Activated CD4-positive, alpha-beta T cell treated with anti-CD3 and anti-CD28 coated beads for 36 hours (primary cell): ENCODE measurements at regions of chr2 and their contacts with region 1.

Region 1: GRCh38 chr2:218257390-218257981 is 3.3 kb upstream of the GPBAR1 start:
- DNase-seq: peak; percentile 85
- ATAC-seq: peak; percentile 75
- H3K4me3 Mint-ChIP-seq: no peak overlapping the region
- H3K27ac Mint-ChIP-seq: peak overlapping the region; percentile 81
- H3K4me1 Mint-ChIP-seq: peaks cover 38% of the 10 kb centered on the region
- H3K27me3 Mint-ChIP-seq: no peaks in the 10 kb centered on the region

Region 2: DNA sequence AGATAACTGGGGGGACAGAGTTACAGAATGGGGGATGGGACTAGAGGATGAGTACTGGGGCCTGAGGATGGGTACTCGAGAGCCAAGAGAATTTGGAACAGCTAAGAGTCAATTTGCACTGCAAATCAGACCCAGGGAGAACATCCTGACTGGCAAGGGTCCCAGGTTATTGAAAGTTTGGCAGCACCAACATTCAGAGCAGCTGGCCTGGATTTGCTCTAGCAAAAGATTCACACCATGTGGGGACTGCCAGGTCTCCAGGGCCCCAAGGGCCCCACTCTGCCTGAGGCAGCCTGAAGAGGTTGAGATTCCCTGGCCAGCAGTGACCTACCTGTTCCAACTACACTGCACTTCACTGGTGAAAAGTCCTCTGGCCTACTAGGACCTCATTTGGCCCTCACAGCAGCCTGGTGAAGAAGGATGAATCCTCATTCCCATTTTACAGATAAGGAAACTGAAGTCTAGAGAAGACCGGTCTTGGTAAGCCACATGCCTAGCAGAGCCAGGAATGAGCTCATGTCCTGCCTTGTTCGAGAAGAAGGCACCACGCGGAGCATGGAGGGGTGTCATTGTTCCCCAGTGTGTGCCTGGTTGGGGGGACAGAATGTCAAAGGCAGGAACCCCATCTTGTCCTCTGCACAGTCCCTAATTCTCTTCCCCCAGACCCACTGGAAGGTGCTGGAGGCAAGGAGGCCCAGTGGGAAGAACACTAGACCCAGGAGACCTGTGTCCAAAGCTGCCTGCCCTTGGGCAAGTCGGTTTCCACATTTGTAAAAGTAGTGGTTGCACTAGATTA is 513.3 kb before region 1 on chr2:
- CTCF ChIA-PET with region 1: no interaction called
- POLR2A ChIA-PET with region 1: no interaction called
- intact Hi-C with region 1: no loop called
- DNase-seq: no peak
- ATAC-seq: no peak
- H3K4me3 Mint-ChIP-seq: no peak overlapping the region
- H3K27ac Mint-ChIP-seq: no peak overlapping the region
- H3K4me1 Mint-ChIP-seq: no peaks in the 10 kb centered on the region
- H3K27me3 Mint-ChIP-seq: no peaks in the 10 kb centered on the region

Region 3: DNA sequence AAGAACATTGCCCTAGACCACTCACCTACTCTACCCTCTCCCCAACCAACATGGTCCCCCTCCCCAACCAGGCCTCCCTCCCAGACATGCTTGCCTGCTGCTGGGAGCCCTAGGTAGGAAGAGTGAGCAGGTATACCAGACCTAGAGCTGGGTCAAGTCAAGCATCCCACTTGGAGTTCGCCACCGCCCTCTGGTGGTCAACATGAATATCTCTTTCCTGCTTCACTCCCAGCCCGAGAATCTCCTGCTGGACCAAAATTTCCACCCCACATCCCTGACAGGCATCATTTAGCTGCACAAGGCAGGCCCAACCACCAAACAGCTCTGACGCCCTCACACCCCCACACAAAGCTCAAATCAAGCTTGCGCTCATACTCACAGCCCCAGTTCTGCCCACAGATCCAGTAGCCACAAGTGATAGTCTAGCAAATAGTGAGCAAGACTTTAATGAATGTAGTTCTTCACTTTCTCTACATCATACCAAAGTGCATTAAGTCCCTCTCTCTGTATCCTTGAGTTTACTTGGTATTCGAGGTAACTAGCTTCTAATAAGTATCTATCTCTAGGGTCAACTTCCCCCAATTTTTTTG is 370.7 kb before region 1 on chr2:
- CTCF ChIA-PET with region 1: no interaction called
- POLR2A ChIA-PET with region 1: no interaction called
- intact Hi-C with region 1: no loop called
- DNase-seq: peak; percentile 84
- ATAC-seq: peak; percentile 86
- H3K4me3 Mint-ChIP-seq: no peak overlapping the region
- H3K27ac Mint-ChIP-seq: no peak overlapping the region
- H3K4me1 Mint-ChIP-seq: no peaks in the 10 kb centered on the region
- H3K27me3 Mint-ChIP-seq: peaks cover 4% of the 10 kb centered on the region

Region 4: DNA sequence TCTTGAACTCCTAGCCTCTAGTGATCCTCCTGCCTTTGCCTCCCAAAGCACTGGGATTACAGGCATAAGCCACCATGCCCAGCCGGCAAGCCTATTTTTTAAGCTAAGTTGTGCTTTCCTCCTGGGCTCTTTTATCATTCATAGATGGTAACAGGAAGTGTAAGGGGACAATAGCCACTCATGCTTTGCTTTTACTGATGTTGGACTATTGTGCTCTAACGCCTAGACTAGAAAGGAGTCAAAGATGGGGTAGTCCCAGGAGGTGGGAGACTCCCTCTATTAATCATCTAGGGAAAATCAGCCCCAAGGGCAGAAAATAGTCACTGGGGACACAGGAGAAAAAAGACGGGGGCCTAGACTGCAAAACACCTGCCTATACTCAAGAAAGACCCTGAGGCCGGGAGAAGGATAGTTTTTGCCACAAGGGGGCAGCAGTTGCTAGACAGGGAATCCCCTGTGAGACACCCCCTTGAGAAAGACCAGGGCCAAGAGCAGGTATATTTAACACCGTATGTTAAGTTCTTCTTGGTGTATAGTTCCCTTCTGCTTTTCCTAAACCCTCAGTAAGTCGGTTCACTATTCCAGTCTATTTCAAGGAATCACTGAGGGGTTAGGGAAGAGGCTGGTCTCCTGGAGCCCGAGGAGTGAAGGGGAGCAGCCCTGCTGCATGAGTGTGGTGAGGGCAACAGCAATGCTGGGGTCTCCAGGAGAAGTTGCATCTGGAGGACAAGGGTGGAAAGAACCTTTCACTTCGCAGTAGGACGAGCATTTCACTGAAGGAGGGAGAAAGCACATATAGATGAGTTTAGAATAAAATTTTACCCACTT is 88.6 kb before region 1 on chr2:
- CTCF ChIA-PET with region 1: interaction called, 37 read pairs
- POLR2A ChIA-PET with region 1: interaction called, 3 read pairs
- intact Hi-C with region 1: loop called (anchors 1 to 5 kb)
- DNase-seq: peak; percentile 80
- ATAC-seq: peak; percentile 80
- H3K4me3 Mint-ChIP-seq: no peak overlapping the region
- H3K27ac Mint-ChIP-seq: no peak overlapping the region
- H3K4me1 Mint-ChIP-seq: peaks cover 18% of the 10 kb centered on the region
- H3K27me3 Mint-ChIP-seq: no peaks in the 10 kb centered on the region

Region 5: GRCh38 chr2:218216674-218217359 is 40.7 kb before region 1 on chr2 and contains the start of gene ARPC2:
- CTCF ChIA-PET with region 1: interaction called, 11 read pairs
- POLR2A ChIA-PET with region 1: interaction called, 4 read pairs
- intact Hi-C with region 1: loop called (anchors 1 to 2 kb)
- DNase-seq: peak; percentile 96
- ATAC-seq: peak; percentile 64
- H3K4me3 Mint-ChIP-seq: peak within 1 kb of the TSS; percentile 81
- H3K27ac Mint-ChIP-seq: peak within 1 kb of the TSS; percentile 96
- H3K4me1 Mint-ChIP-seq: peaks cover 34% of the 10 kb centered on the region
- H3K27me3 Mint-ChIP-seq: no peaks in the 10 kb centered on the region
- total RNA-seq, gene ARPC2: 563 to 632 TPM

Region 6: DNA sequence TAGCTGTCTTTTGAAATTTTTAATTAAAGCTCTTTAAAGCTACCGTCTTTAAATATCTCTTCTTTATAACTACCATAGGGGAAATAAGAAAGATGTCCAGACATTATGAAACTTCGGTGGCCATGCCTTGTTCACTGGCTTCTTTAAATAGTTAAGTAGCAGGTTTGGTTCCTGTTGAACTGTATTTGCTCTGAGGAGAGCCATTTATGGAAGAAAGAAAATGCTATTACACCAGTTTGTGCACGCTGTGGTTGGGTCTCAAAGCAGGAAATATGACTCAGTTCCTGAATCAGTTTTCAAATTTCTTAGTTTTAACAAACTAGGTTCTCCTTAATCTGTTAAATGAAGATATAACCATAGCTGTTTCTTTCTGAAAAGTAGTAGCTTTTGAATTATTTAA is 28.2 kb before region 1 on chr2:
- CTCF ChIA-PET with region 1: interaction called, 47 read pairs
- POLR2A ChIA-PET with region 1: no interaction called
- intact Hi-C with region 1: no loop called
- DNase-seq: peak; percentile 70
- ATAC-seq: peak; percentile 83
- H3K4me3 Mint-ChIP-seq: peak overlapping the region; percentile 45
- H3K27ac Mint-ChIP-seq: peak overlapping the region; percentile 95
- H3K4me1 Mint-ChIP-seq: peaks cover 77% of the 10 kb centered on the region
- H3K27me3 Mint-ChIP-seq: no peaks in the 10 kb centered on the region

Region 7: GRCh38 chr2:218245214-218245613 is 12.3 kb before region 1 on chr2:
- CTCF ChIA-PET with region 1: interaction called, 25 read pairs
- POLR2A ChIA-PET with region 1: interaction called, 5 read pairs
- intact Hi-C with region 1: no loop called
- DNase-seq: no peak
- ATAC-seq: peak; percentile 23
- H3K4me3 Mint-ChIP-seq: no peak overlapping the region
- H3K27ac Mint-ChIP-seq: peak overlapping the region; percentile 72
- H3K4me1 Mint-ChIP-seq: peaks cover 4% of the 10 kb centered on the region
- H3K27me3 Mint-ChIP-seq: no peaks in the 10 kb centered on the region

Region 8: GRCh38 chr2:218387374-218388194 is 130.1 kb after region 1 on chr2:
- CTCF ChIA-PET with region 1: no interaction called
- POLR2A ChIA-PET with region 1: no interaction called
- intact Hi-C with region 1: no loop called
- DNase-seq: peak; percentile 40
- ATAC-seq: peak; percentile 82
- H3K4me3 Mint-ChIP-seq: peak overlapping the region; percentile 1
- H3K27ac Mint-ChIP-seq: peak overlapping the region; percentile 1
- H3K4me1 Mint-ChIP-seq: peaks cover 4% of the 10 kb centered on the region
- H3K27me3 Mint-ChIP-seq: no peaks in the 10 kb centered on the region

Region 9: GRCh38 chr2:218708086-218708485 is 450.6 kb after region 1 on chr2:
- CTCF ChIA-PET with region 1: no interaction called
- POLR2A ChIA-PET with region 1: no interaction called
- intact Hi-C with region 1: no loop called
- DNase-seq: no peak
- ATAC-seq: no peak
- H3K4me3 Mint-ChIP-seq: no peak overlapping the region
- H3K27ac Mint-ChIP-seq: no peak overlapping the region
- H3K4me1 Mint-ChIP-seq: peaks cover 11% of the 10 kb centered on the region
- H3K27me3 Mint-ChIP-seq: no peaks in the 10 kb centered on the region